ENCODE measurements at regions of chr12 and their contacts with region 1.

Region 1: DNA sequence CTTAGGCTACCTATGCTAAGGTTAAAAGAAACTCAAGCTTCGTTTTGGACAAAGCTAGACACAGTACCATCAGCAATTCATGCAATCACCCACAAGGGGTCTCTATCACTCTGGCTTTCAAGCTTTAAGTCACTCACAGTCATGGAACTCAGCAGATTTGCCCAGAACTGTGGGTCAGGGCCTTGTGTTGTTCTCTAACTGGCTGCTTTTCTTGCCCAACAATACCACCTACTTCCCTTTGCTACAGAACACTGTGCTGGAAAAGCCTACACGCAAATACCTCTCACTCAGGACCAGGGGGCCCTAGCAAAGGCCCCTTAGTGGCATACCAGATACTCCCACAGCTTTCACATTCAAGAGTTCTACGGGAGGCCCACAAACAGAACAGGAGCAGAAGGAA is 9.1 kb downstream of the NEMP1 start:
- DNase-seq: peak; percentile 63
- H3K4me3 ChIP-seq: no peak overlapping the region
- H3K27ac ChIP-seq: no peak overlapping the region
- H3K4me1 ChIP-seq: peaks cover 9% of the 10 kb centered on the region
- H3K27me3 ChIP-seq: no peaks in the 10 kb centered on the region
- CTCF ChIP-seq: peak; percentile 83 to 90

Region 2: GRCh38 chr12:56688129-56688845 is 381.2 kb before region 1 on chr12 and contains the start of gene PTGES3:
- CTCF ChIA-PET with region 1: no interaction called
- dilution Hi-C with region 1: no loop called
- in situ Hi-C with region 1: no loop called
- intact Hi-C with region 1: no loop called
- DNase-seq: peak; percentile 98
- H3K4me3 ChIP-seq: peak within 1 kb of the TSS; percentile 64 to 94 (median 78)
- H3K27ac ChIP-seq: peak within 1 kb of the TSS; percentile 89
- H3K4me1 ChIP-seq: peaks cover 4% of the 10 kb centered on the region
- H3K27me3 ChIP-seq: no peaks in the 10 kb centered on the region
- CTCF ChIP-seq: peak in 1 of 2 donors; percentile 4
- total RNA-seq, gene PTGES3: 63.5 to 197 TPM

Region 3: GRCh38 chr12:57088459-57089248 is 19.1 kb after region 1 on chr12 and contains the start of gene NAB2:
- CTCF ChIA-PET with region 1: interaction called, 8 read pairs
- dilution Hi-C with region 1: no loop called
- in situ Hi-C with region 1: no loop called
- intact Hi-C with region 1: loop called (anchors 1 kb)
- DNase-seq: peak; percentile 90
- H3K4me3 ChIP-seq: peak within 1 kb of the TSS; percentile 72 to 96 (median 88)
- H3K27ac ChIP-seq: peak within 1 kb of the TSS; percentile 97
- H3K4me1 ChIP-seq: peaks cover 60% of the 10 kb centered on the region
- H3K27me3 ChIP-seq: no peaks in the 10 kb centered on the region
- CTCF ChIP-seq: no peak
- total RNA-seq, gene NAB2: 33.8 to 35.3 TPM

Region 4: GRCh38 chr12:57139796-57140649 is 70.5 kb after region 1 on chr12:
- CTCF ChIA-PET with region 1: no interaction called
- dilution Hi-C with region 1: loop called (anchors 5 kb)
- in situ Hi-C with region 1: no loop called
- intact Hi-C with region 1: no loop called
- DNase-seq: no peak
- H3K4me3 ChIP-seq: no peak overlapping the region
- H3K27ac ChIP-seq: no peak overlapping the region
- H3K4me1 ChIP-seq: no peaks in the 10 kb centered on the region
- H3K27me3 ChIP-seq: no peaks in the 10 kb centered on the region
- CTCF ChIP-seq: no peak

Region 5: DNA sequence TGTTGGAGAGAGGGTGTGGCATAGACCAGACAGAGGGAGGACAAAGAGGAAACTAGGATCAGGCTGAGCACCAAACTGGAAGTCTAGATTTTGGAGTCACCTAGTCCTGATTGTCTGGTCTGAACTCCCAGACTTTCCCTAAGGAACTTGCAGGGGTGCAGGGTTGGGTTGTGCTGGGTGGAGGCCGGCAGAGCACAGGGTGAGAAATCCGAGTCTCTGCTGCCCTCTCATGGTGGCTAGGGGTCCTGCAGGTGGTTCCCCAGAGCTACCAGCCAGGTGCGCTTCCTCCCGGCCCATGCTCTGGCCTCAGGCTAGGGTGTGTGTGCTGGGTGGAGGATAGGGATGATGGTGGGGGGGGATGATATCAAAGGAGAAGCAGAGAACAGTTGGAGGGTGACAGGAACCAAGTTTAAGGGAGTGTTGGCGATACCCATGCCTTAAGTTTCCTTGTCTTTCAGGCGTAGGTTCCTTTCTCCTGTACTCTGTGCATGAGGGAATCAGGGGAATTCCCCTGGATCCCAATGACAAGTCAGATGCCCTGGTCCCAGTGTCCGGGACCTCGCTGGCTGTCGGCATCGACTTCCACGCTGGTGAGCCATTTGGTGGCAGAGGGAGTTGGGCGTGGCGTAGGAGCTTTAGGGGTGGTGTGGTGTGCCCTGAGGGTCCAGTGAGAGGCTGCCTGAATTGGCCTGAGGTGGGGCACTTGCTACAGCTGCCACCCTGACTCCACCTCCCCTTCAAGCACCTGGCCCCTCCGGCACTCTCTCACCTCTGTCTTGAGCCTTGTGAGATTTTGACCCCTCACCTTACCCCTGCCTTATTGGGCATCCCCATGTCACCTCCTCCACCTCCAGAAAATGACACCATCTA is 113.6 kb after region 1 on chr12:
- CTCF ChIA-PET with region 1: no interaction called
- dilution Hi-C with region 1: no loop called
- in situ Hi-C with region 1: loop called in 1 of 2 experiments (anchors 10 kb)
- intact Hi-C with region 1: loop called (anchors 1 kb)
- DNase-seq: peak; percentile 79
- H3K4me3 ChIP-seq: no peak overlapping the region
- H3K27ac ChIP-seq: no peak overlapping the region
- H3K4me1 ChIP-seq: peaks cover 22% of the 10 kb centered on the region
- H3K27me3 ChIP-seq: no peaks in the 10 kb centered on the region
- CTCF ChIP-seq: peak; percentile 91 to 96

Region 6: DNA sequence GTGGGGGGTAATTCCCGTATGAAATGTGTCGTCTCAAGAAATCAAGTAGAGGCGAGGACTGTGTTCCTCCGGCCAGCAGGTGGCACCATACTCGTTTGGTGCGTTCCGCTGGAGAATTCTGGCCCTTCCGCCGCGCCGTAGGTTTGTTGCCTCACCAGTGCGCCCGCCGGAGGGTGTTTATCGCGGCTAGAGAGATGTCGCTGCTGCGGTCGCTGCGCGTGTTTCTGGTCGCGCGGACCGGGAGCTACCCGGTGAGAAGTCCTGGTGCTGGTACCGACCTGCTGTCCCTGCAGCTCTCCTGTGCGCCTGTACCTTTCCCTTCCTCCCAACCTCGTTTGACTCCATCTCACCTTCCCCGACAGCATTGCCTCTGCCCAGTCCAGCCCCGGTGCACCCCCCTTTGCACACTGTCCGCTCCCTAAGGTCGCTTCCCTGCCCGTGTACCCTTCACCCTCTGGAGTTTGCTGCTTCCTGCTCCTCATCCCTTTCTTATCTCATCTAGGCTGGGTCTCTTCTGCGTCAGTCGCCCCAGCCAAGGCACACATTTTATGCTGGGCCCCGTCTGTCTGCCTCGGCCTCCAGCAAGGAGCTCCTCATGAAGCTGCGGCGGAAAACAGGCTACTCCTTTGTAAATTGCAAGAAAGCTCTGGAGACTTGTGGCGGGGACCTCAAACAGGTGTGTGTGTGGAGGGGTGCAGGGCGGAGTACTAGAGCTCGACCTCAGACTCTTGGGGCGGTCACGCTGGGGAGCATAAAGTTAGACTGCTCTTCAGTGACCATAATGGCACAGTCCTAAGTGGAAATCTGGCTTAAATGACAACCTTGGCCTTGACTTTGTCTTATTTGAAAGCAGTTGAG is 713.3 kb after region 1 on chr12 and contains the start of gene TSFM:
- CTCF ChIA-PET with region 1: no interaction called
- dilution Hi-C with region 1: no loop called
- in situ Hi-C with region 1: no loop called
- intact Hi-C with region 1: no loop called
- DNase-seq: peak; percentile 86
- H3K4me3 ChIP-seq: peak within 1 kb of the TSS; percentile 90 to 98 (median 98)
- H3K27ac ChIP-seq: peak within 1 kb of the TSS; percentile 69
- H3K4me1 ChIP-seq: peaks cover 10% of the 10 kb centered on the region
- H3K27me3 ChIP-seq: no peaks in the 10 kb centered on the region
- CTCF ChIP-seq: peak; percentile 80 to 94
- total RNA-seq, gene TSFM: 11.8 to 27.0 TPM